ENCODE measurements at regions of chr6 and their contacts with region 1.

Region 1: DNA sequence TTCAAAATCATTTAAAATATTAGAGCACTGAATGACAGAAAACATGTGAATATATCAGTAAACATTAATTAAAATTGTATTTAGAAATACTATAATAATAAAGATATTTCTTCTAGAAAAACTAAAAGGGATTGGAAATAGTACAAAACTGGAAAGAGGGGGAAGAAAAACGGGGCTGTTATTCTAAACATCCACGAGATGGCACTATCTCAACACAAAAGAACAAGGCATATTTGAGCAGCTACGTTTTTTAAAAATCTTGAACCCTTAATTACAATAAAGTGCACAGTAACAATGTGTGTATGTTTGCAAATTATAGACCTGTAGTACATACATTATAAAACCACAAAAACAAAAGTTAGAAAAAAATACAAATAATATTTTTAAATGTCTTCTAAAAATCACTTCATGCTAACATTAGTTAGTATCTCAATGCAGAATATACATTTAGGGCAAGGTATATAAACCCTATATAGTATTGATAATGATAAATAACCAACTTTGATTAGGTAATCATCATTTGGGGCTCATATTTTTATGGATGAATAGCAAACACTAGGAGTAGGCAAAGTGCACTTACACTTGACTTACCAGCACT is 42.5 kb upstream of the PNISR start:
- DNase-seq: no peak
- H3K4me3 ChIP-seq: no peak overlapping the region
- H3K27ac ChIP-seq: no peak overlapping the region
- H3K4me1 ChIP-seq: no peaks in the 10 kb centered on the region
- H3K27me3 ChIP-seq: no peaks in the 10 kb centered on the region
- CTCF ChIP-seq: peak; percentile 54

Region 2: DNA sequence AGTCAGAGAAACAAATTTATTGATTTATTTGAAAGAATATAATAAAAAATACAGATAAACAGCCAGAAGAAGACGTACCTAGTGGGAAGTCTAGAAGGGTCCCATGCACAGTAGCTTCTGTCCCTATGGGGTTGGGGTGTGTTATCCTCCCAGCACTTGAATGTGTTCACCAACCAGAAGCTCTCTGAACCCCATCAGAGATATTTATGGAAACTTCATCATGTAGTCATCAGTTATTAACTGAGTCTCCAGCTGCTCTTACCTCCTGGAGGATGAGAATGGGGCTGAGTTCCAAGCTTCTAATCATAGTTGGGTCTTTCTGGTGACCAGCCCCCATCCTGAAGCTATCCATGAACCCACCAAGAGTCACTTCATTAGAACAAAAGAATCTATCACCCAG is 63.0 kb after region 1 on chr6:
- intact Hi-C with region 1: no loop called
- DNase-seq: no peak
- H3K4me3 ChIP-seq: no peak overlapping the region
- H3K27ac ChIP-seq: no peak overlapping the region
- H3K4me1 ChIP-seq: no peaks in the 10 kb centered on the region
- H3K27me3 ChIP-seq: no peaks in the 10 kb centered on the region
- CTCF ChIP-seq: no peak

Region 3: DNA sequence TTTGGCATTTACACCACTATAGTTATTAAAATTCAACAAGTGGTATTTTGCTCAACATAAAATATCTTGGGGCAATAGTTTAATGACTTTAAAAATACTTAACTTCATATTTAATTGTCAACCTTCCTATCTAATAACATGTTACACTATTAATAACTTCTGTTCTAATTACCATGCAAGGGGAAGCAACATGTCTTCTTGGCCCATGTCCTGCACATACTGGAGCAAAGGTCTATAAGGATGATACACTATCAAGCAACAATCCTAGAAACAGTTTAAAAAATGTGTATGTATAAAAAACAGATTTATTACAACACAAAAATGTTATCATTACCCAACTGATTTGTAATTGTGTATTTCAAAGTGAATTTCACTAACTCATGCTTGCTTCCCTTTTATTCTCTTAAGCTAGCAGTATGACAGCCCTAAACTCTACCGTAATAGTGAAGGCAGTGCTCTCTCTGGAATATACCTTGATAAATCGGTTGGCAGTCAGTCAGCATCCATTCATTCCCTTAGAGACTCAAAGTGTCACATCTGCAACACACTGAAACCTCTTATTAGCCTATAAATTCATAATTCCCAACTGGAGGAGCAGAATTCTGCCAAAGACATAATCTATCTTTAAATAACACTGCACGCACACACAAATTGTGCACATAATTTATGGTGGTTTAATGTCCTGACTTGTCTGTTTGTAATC is 82.6 kb after region 1 on chr6:
- intact Hi-C with region 1: no loop called
- DNase-seq: no peak
- H3K4me3 ChIP-seq: no peak overlapping the region
- H3K27ac ChIP-seq: no peak overlapping the region
- H3K4me1 ChIP-seq: no peaks in the 10 kb centered on the region
- H3K27me3 ChIP-seq: no peaks in the 10 kb centered on the region
- CTCF ChIP-seq: no peak

Region 4: DNA sequence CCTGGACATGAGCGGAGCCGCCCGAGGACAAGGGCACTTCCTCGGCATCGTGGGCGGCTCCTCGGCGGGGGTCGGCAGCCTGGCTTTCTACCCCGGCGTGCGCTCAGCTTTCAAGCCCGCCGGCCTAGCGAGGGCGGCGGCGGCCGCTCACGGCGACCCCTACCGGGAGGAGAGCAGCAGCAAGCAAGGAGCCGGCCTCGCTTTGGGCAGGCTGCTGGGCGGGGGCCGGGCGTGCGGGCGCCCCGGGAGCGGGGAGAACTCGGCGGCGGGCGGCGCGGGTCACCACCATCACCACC is 145.7 kb after region 1 on chr6:
- intact Hi-C with region 1: loop called (anchors 10 kb)
- DNase-seq: peak; percentile 41
- H3K4me3 ChIP-seq: peak overlapping the region; percentile 47
- H3K27ac ChIP-seq: no peak overlapping the region
- H3K4me1 ChIP-seq: peaks cover 12% of the 10 kb centered on the region
- H3K27me3 ChIP-seq: peaks cover 96% of the 10 kb centered on the region
- CTCF ChIP-seq: peak; percentile 29